Left cardiac atrium (tissue), 4 donors: ENCODE measurements at regions of chr15 and their contacts with region 1.

Region 1: DNA sequence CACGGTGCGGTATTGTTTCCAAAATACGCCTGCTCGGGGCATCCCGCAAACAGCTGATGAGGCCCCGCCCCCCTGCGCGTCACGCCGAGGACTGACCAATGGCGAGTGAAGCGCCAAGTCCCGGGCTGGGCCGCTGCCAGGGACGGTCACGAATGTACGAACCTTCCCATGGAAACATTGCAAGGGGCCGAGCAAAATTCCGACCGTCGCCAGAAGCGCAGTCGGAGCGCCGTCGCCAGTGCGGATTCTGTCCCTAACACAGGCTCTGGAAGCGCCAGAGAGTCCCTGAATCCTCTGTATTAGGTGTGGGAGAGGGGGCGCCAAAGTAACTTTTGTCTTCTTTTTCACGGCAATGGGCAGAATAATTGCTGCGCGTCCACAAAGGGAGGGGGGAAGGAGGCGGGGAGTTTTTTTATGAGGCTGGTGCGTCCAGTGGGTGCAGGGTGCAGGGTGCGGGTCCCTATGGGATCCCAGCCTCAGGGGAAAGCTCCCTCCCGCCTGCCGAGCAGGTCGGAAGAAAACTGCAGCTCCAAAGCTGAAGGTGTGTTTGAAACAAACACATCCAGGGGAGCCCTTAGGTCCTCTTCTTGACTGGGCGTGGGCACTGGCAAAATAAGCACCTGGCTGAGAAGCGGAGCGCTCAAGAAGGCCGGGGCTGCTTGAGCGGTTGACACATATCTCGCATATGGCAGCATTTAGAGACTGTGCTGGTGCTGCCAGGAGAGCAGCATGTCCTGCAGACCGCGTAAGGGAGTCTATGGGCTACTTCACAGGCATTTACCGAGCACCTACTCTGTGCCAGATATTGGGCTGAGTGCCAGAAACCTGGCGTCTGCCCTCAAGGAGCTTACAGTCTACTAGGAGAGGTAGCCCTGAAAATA is at the start of gene BMF:
- DNase-seq: peak; percentile 100
- ATAC-seq: peak; percentile 85
- total RNA-seq, gene BMF: 1.9 to 5.0 TPM

Region 2: GRCh38 chr15:40069178-40070165 is 39.6 kb before region 1 on chr15:
- intact Hi-C with region 1: loop called in 1 of 2 experiments (anchors 5 kb)
- DNase-seq: peak; percentile 93
- ATAC-seq: peak; percentile 93 to 97

Region 3: DNA sequence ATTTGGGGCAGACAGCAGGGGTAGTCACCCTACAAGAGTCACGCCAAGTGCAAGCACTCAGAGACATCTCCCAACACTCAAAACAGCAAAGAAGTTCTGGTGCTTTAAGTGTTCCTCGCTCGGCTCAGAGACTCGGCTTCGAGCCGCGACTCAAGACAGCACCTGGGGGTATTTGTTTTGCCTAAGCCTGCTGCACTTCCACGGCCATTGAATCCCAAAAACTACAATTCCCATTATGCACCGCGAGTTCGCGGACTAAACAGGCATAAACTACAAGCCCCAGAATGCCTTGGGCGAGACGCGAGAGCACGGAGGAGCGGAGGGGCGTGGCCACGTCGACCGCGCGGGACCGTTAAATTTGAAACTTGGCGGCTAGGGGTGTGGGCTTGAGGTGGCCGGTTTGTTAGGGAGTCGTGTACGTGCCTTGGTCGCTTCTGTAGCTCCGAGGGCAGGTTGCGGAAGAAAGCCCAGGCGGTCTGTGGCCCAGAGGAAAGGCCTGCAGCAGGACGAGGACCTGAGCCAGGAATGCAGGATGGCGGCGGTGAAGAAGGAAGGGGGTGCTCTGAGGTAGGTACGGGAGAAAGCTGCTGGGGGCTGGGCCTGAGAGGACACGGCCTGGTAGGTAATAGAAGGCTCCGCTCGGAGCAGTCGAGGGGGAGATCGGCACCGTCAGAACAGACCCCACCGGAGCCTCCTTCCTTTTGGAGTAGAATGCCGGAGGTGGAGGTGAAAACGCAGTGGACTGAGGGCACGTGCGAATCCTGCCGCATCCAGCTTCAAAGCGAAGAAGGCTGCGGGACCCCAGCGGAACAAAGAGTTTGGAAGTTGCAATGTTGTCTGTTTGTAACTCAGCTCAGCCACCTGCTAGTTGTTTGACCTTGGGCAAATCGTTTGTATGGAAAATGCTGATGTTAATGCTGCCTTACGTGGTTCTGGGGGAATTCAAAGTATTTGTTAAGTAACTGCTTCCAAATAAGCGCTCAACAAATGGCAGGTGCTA is 51.9 kb after region 1 on chr15 and contains the start of gene BUB1B:
- intact Hi-C with region 1: loop called in 1 of 2 experiments (anchors 10 kb)
- DNase-seq: peak; percentile 94
- ATAC-seq: peak; percentile 99
- total RNA-seq, gene BUB1B: 0.71 to 1.3 TPM